AG04449 (cell line): ENCODE measurements at regions of chr16 and their contacts with region 1.

Region 1: DNA sequence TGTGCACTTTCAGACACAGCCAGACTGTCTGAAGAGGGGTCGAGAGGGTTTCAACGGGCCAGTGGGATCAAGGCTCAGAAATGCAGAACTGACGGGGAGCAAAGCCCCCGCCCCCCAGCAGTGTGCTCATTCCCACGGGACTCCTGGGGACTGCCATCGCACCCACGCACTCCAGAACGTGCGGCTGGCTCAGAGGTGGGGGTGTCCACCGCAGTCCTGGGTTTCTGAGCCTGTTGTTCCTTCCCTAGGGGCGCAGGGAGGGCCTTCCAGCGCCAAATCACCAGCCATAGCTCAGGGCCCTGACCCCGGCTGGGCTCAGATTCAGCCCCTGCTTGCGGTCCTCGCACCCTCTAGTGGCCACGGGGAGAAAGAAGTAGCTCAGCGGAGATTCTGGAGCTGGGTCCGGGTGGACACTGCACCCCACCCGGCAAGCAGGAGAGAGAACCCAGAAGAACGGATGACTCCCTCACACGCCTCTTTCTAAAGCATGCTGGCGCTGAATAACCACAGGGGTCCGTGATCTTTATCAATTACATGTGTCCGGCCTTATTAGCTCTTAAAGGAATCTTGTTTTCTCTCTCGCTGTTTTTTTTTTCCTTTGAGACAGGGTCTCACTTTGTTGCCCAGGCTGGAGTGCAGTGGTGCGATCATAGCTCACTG is 45.0 kb upstream of the USP7 start:
- DNase-seq: no peak
- H3K4me3 ChIP-seq: peak overlapping the region; percentile 30
- CTCF ChIP-seq: peak; percentile 95

Region 2: DNA sequence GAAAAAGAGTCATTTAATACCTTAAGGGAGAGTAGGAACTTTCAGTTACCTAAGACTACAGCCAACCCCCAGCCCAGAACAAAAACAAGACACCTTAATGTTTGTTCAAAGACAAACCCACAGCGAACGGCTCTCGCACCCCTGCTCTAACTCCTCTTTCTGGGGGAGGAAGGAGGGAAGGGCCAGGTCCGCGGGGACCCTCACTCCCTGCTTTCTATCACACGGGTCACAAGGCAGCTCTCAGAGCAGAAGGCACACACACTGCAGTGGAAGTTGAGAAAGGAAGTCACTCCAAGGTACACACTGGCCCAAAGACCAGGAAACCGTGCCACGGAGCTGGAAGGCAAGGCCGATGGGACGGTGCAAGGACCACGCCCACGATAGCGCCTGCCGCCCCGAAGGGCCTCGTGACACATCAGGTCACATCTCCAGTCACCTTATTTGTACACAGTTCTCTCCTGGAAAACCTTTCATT is 116.6 kb before region 1 on chr16:
- CTCF ChIA-PET with region 1: interaction called, 13 read pairs
- POLR2A ChIA-PET with region 1: no interaction called
- DNase-seq: no peak
- H3K4me3 ChIP-seq: no peak overlapping the region
- CTCF ChIP-seq: no peak

Region 3: GRCh38 chr16:8908810-8909468 is 99.8 kb before region 1 on chr16:
- CTCF ChIA-PET with region 1: interaction called, 44 read pairs
- POLR2A ChIA-PET with region 1: no interaction called
- DNase-seq: no peak
- H3K4me3 ChIP-seq: no peak overlapping the region
- CTCF ChIP-seq: no peak

Region 4: DNA sequence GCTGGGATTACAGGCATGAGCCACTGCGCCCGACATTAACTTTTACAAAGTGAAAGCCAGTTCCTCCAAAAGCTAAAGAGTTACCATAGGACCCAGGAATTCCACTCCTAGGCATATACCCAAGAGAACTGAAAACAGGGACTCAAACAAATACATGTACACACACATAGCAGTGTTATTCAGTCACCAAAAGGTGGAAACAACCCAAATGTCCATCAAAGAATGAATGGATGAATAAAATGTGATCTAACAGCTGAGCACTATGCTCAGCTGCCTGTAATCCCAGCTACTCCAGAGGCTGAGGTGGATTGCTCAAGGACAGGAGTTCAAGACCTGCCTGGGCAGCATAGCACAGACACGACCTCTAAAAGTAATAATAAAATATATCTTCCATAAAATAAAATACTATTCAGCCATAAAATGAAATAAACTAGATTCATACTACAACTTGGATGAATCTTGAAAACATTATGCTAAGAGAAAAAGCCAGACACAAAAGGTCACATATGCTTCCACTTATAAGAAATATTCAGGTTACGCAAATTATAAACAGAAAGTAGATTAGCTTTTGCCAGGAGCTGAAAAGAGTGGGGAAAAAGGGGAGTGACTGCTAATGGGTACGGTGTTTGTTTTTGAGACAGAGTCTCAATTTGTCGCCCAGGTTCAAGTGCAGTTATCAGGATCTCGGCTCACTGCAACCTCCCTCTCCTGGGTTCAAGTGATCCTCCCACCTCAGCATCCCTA is 35.7 kb before region 1 on chr16:
- CTCF ChIA-PET with region 1: interaction called, 16 read pairs
- POLR2A ChIA-PET with region 1: no interaction called
- DNase-seq: no peak
- H3K4me3 ChIP-seq: no peak overlapping the region
- CTCF ChIP-seq: no peak

Region 5: DNA sequence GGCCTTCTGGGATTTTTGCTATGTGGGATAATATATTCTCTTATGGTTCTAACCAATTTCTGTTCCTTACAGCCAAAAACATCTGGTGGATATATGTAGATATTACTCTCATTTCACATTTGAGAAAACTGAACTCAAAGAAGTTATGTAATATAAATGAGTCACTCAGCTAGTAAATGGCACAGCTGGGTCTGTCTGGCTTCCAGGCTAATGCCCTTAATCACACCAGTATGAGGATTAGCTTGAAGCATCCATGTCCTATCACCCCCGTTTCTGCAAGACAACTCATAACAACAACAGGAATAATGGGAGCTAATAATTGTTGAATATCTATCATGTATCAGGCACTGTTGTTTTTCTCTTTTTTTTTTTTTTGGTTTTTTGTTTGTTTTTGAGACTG is 10.6 kb before region 1 on chr16:
- CTCF ChIA-PET with region 1: interaction called, 45 read pairs
- POLR2A ChIA-PET with region 1: interaction called, 3 read pairs
- DNase-seq: no peak
- H3K4me3 ChIP-seq: no peak overlapping the region
- CTCF ChIP-seq: no peak

Region 6: GRCh38 chr16:9047686-9048301 is 39.1 kb after region 1 on chr16:
- CTCF ChIA-PET with region 1: interaction called, 14 read pairs
- POLR2A ChIA-PET with region 1: interaction called, 3 read pairs
- DNase-seq: peak; percentile 96
- H3K4me3 ChIP-seq: no peak overlapping the region
- CTCF ChIP-seq: no peak

Region 7: DNA sequence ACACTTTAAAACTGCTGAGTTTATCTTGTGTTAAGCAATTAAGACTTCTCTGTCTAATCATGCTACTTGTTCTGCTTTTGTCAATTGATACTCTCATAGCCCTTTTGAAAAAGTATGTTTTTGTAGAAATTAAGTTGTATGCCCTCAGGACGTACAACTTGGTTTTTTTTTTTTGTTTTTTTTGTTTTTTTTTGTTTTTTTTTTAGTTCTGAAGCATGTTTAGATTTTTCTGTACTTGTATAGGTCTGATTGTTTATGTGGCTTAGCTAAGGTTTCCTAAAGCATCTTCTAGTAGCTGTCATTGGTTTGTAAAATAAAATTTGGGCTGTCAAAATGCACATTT is 104.1 kb after region 1 on chr16:
- CTCF ChIA-PET with region 1: no interaction called
- POLR2A ChIA-PET with region 1: no interaction called
- DNase-seq: no peak
- H3K4me3 ChIP-seq: no peak overlapping the region
- CTCF ChIP-seq: no peak